Heart left ventricle (tissue), 16 donors: ENCODE measurements at regions of chr17 and their contacts with region 1.

Region 1: GRCh38 chr17:21126645-21127510 is at the start of gene DHRS7B:
- DNase-seq: peak; percentile 95 to 98 (median 98)
- ATAC-seq: peak; percentile 92 to 97 (median 97)
- H3K4me3 ChIP-seq: peak within 1 kb of the TSS; percentile 58 to 95 (median 72)
- H3K27ac ChIP-seq: peak within 1 kb of the TSS; percentile 51 to 96 (median 88)
- H3K4me1 ChIP-seq: peaks cover 3 to 65% (median 19%) of the 10 kb centered on the region in 12 donors
- H3K27me3 ChIP-seq: no peaks in the 10 kb centered on the region
- CTCF ChIP-seq: peak in 2 of 12 donors; percentile 10 to 16
- POLR2A ChIP-seq: peak in 1 of 2 donors; percentile 68
- total RNA-seq, gene DHRS7B: 20.2 to 45.2 (median 34.7) TPM

Region 2: DNA sequence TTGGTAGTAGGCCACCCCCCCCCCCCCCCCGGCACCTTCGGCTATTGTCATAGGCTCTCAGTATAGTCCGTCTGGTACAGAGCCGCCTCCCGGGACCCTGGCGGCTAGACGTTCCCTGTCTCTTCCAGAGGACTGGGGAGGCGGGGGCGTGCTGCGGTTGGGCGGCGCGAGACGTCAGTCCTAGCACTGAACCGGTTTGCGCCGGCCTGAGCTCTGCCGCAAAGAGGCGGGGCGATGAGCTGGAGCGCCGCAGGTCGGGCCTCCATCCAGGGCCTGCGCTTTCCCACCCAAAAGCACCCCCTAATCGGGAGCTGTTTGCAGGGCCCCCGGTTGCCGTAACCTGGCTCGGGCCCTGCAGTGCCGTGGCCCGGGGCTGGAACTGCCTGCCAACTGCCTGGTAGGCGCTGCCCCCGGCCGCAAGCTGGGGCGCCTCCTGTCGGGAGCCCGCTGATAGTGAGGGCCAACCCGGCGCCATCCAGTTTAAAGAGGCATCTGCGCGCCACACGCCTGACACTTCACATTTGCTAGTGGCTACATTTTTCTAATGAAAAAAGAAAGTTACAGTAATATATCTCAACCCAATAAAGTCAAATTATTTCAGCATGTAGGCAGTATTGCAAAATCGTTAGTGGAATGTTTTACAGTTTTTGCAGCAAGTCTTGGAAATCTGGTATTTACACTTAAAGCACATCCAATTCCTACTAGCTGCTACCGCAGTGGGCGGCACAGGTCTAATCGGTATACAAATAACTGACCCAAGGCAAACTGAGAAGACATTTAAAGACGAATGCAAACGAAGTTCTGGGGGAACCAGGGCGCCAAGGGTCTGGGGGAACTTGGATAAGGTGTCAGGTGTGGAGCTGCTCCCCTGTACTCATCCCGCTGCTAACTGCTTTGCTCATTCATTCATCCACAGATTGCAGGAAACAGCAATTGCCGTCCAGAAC is 83.3 kb before region 1 on chr17:
- intact Hi-C with region 1: loop called in 2 of 10 experiments (anchors 2 to 5 kb)
- DNase-seq: peak; percentile 99
- ATAC-seq: peak; percentile 93 to 98 (median 97)
- H3K4me3 ChIP-seq: peak overlapping the region; percentile 28 to 97 (median 71)
- H3K27ac ChIP-seq: peak overlapping the region; percentile 82 to 100 (median 96)
- H3K4me1 ChIP-seq: peaks cover 0 to 42% (median 29%) of the 10 kb centered on the region in 12 donors
- H3K27me3 ChIP-seq: no peaks in the 10 kb centered on the region
- CTCF ChIP-seq: peak; percentile 72 to 98 (median 90)
- POLR2A ChIP-seq: peak in 1 of 2 donors; percentile 77

Region 3: GRCh38 chr17:21214015-21214776 is 87.3 kb after region 1 on chr17 and contains the start of gene TMEM11:
- intact Hi-C with region 1: loop called in 8 of 10 experiments (anchors 2 to 10 kb)
- DNase-seq: peak; percentile 96 to 99 (median 98)
- ATAC-seq: peak; percentile 92 to 96 (median 96)
- H3K4me3 ChIP-seq: peak within 1 kb of the TSS; percentile 65 to 100 (median 89)
- H3K27ac ChIP-seq: peak within 1 kb of the TSS; percentile 88 to 99 (median 97)
- H3K4me1 ChIP-seq: peaks cover 6 to 58% (median 49%) of the 10 kb centered on the region in 12 donors
- H3K27me3 ChIP-seq: no peaks in the 10 kb centered on the region
- CTCF ChIP-seq: peak in 5 of 12 donors; percentile 16 to 42 (median 29)
- POLR2A ChIP-seq: peak in 1 of 2 donors; percentile 70
- total RNA-seq, gene TMEM11: 23.2 to 46.6 (median 32.0) TPM

Region 4: DNA sequence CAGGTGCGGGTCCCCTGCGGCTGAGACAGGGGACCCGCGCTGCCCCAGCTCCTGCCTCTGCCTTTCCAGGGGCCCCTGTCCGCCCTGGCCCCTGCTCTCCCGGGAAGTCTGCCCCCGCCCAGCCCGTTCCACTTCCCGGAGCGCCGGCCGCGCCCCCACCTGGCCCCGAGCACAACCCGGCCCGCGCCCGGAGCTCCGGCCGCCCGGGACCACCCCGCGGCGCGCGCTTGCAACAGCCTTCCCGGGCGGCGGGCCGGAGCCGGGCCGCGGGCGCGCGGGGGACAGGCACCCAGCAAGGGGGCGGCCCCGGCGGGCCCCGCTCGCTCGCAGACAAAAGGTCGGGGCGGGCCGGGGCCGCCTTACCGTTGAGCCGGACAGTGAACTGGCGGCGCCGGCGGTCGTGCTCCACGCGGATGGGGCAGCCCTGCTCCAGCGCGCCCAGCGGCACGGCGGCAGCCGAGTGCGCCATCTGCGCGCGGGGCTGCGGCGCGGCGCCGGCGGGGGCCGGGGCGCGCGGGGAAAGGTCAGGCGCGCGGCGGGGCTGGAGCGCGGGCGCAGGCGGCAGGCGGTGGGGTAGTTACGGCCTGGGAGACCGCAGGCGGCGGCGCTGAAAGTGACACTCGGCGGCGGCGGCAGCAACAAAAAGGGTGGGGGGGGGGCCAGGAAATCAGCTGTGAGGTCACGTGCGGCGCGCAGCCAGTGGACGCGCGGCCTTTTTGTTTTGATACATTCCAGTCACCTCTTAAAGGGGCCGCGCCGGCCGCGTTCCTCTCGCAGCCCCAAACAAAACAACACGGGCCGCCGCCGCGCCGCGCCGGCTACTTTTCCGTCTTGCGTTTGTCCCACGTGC is 126.1 kb after region 1 on chr17 and contains the start of gene NATD1:
- intact Hi-C with region 1: loop called in 9 of 10 experiments (anchors 5 to 10 kb)
- DNase-seq: peak; percentile 86 to 94 (median 91)
- ATAC-seq: peak; percentile 64 to 89 (median 78)
- H3K4me3 ChIP-seq: peak within 1 kb of the TSS; percentile 39 to 91 (median 64)
- H3K27ac ChIP-seq: peak within 1 kb of the TSS; percentile 23 to 87 (median 72)
- H3K4me1 ChIP-seq: peaks cover 0 to 53% (median 38%) of the 10 kb centered on the region in 12 donors
- H3K27me3 ChIP-seq: no peaks in the 10 kb centered on the region
- CTCF ChIP-seq: no peak
- POLR2A ChIP-seq: peak in 1 of 2 donors; percentile 50
- total RNA-seq, gene NATD1: 12.8 to 38.4 (median 19.8) TPM

Region 5: GRCh38 chr17:21284319-21285163 is 157.7 kb after region 1 on chr17 and contains the start of gene MAP2K3:
- intact Hi-C with region 1: loop called in 6 of 10 experiments (anchors 2 to 10 kb)
- DNase-seq: peak; percentile 99 to 100 (median 100)
- ATAC-seq: peak; percentile 79 to 89 (median 86)
- H3K4me3 ChIP-seq: peak within 1 kb of the TSS; percentile 49 to 99 (median 92)
- H3K27ac ChIP-seq: peak within 1 kb of the TSS; percentile 83 to 99 (median 94)
- H3K4me1 ChIP-seq: peaks cover 16 to 72% (median 50%) of the 10 kb centered on the region in 12 donors
- H3K27me3 ChIP-seq: no peaks in the 10 kb centered on the region
- CTCF ChIP-seq: peak in 1 of 12 donors; percentile 12
- POLR2A ChIP-seq: peak; percentile 90 to 99
- total RNA-seq, gene MAP2K3: 29.4 to 170 (median 54.4) TPM

Region 6: DNA sequence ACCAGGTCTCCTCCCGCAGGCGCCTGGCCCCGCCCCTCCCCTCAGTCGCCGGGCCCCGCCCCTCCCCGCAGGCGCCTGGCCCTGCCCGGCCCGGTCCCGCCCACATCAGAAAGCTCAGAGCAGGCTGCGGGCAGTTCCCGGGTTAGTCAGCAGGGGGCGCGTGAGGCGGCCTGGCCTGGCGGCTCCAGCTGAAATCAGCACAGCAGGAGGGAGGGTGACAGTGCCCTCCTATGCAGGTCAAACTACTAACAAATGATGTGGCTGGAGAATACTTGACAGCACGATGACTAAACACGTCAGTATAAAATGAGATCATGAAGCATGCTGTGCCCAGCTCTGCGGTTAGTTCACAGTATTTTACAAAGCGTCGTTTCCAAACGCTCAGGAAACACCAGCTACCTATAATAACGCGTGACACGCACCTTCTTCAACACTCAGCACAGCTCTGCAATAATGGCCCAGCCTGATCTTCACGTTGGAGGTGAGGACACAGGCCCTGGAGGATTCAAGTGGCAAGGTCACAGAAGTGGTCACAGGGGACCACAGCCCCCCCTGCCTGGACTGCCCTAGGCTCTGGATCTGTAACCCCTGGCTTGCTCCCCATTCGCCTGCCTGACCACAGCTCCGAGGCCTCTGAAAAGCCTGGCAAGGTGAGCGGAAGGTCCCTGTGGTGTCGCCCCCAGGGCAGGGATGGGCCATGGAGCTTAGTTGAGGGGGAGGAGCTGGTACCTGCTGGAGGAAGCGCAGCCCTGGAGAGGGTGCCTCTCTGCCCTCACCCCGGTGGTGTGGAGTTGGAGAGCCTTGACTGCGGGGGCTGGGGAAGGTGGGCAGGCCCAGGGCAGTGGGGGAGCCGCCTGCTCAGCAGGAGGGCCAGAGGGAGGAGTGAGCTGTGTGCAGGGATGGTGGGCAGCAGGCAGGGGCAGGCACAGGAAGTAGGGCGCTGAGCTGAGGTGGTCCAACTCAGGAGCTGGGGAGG is 330.5 kb after region 1 on chr17:
- intact Hi-C with region 1: loop called in 8 of 10 experiments (anchors 5 to 10 kb)
- DNase-seq: peak; percentile 86 to 95 (median 90)
- ATAC-seq: peak; percentile 81 to 94 (median 93)
- H3K4me3 ChIP-seq: no peak overlapping the region
- H3K27ac ChIP-seq: no peak overlapping the region
- H3K4me1 ChIP-seq: peaks cover 0 to 15% (median 6%) of the 10 kb centered on the region in 12 donors
- H3K27me3 ChIP-seq: no peaks in the 10 kb centered on the region
- CTCF ChIP-seq: peak; percentile 91 to 99 (median 94)
- POLR2A ChIP-seq: no peak